Activated CD4-positive, alpha-beta T cell treated with anti-CD3 and anti-CD28 coated beads for 36 hours (primary cell): ENCODE measurements at regions of chr16 and their contacts with region 1.

Region 1: GRCh38 chr16:1492923-1493745 is at the start of gene TELO2:
- DNase-seq: peak; percentile 94
- ATAC-seq: peak; percentile 89
- H3K4me3 Mint-ChIP-seq: peak within 1 kb of the TSS; percentile 92
- H3K27ac Mint-ChIP-seq: peak within 1 kb of the TSS; percentile 97
- H3K4me1 Mint-ChIP-seq: peaks cover 15% of the 10 kb centered on the region
- H3K27me3 Mint-ChIP-seq: no peaks in the 10 kb centered on the region
- total RNA-seq, gene TELO2: 48.1 to 60.0 TPM

Region 2: GRCh38 chr16:1272574-1273113 is 220.5 kb before region 1 on chr16:
- CTCF ChIA-PET with region 1: no interaction called
- POLR2A ChIA-PET with region 1: no interaction called
- intact Hi-C with region 1: no loop called
- DNase-seq: no peak
- ATAC-seq: no peak
- H3K4me3 Mint-ChIP-seq: no peak overlapping the region
- H3K27ac Mint-ChIP-seq: no peak overlapping the region
- H3K4me1 Mint-ChIP-seq: peaks cover 2% of the 10 kb centered on the region
- H3K27me3 Mint-ChIP-seq: peaks cover 11% of the 10 kb centered on the region

Region 3: GRCh38 chr16:1351582-1352362 is 141.4 kb before region 1 on chr16 and contains the starts of genes GNPTG and TSR3:
- CTCF ChIA-PET with region 1: no interaction called
- POLR2A ChIA-PET with region 1: no interaction called
- intact Hi-C with region 1: loop called in 1 of 2 experiments (anchors 1 kb)
- DNase-seq: peak; percentile 91
- ATAC-seq: peak; percentile 87
- H3K4me3 Mint-ChIP-seq: peak within 1 kb of the TSS; percentile 85
- H3K27ac Mint-ChIP-seq: peak within 1 kb of the TSS; percentile 79
- H3K4me1 Mint-ChIP-seq: peaks cover 37% of the 10 kb centered on the region
- H3K27me3 Mint-ChIP-seq: no peaks in the 10 kb centered on the region
- total RNA-seq, gene GNPTG: 16.3 to 17.4 TPM
- total RNA-seq, gene TSR3: 37.6 to 58.7 TPM

Region 4: GRCh38 chr16:1408171-1408837 is 84.8 kb before region 1 on chr16:
- CTCF ChIA-PET with region 1: interaction called, 3 read pairs
- POLR2A ChIA-PET with region 1: no interaction called
- intact Hi-C with region 1: loop called in 1 of 2 experiments (anchors 1 kb)
- DNase-seq: peak; percentile 95
- ATAC-seq: peak; percentile 94
- H3K4me3 Mint-ChIP-seq: peak overlapping the region; percentile 63
- H3K27ac Mint-ChIP-seq: no peak overlapping the region
- H3K4me1 Mint-ChIP-seq: peaks cover 18% of the 10 kb centered on the region
- H3K27me3 Mint-ChIP-seq: no peaks in the 10 kb centered on the region

Region 5: DNA sequence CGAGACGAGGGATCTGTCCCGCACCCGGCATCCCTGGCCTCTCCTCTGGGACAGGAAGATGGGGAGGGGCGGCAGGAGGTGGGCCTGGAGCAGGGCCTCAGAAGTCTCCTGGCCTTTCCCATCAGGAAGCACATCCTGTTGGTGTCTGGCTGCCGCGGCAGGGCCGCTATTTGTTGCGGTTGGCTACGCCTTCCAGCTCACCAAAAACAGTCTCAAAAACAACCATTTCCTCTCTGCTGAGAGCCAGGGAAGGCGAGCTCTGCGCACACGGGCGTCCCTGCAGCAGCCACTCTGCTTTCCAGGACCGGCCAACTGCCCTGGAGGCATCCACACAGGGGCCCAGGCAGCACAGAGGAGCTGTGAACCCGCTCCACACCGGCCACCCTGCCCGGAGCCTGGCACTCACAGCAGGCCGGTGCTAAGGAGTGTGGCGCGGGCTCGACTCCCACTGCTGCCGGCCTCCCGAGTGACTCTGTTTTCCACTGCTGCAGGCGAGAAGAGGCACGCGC is 40.4 kb after region 1 on chr16 and contains the start of gene TMEM204:
- CTCF ChIA-PET with region 1: no interaction called
- POLR2A ChIA-PET with region 1: no interaction called
- intact Hi-C with region 1: loop called in 1 of 2 experiments (anchors 1 kb)
- DNase-seq: peak; percentile 66
- ATAC-seq: peak; percentile 25
- H3K4me3 Mint-ChIP-seq: peak within 1 kb of the TSS; percentile 95
- H3K27ac Mint-ChIP-seq: peak within 1 kb of the TSS; percentile 94
- H3K4me1 Mint-ChIP-seq: peaks cover 39% of the 10 kb centered on the region
- H3K27me3 Mint-ChIP-seq: no peaks in the 10 kb centered on the region
- total RNA-seq, gene TMEM204: 12.6 to 17.5 TPM

Region 6: DNA sequence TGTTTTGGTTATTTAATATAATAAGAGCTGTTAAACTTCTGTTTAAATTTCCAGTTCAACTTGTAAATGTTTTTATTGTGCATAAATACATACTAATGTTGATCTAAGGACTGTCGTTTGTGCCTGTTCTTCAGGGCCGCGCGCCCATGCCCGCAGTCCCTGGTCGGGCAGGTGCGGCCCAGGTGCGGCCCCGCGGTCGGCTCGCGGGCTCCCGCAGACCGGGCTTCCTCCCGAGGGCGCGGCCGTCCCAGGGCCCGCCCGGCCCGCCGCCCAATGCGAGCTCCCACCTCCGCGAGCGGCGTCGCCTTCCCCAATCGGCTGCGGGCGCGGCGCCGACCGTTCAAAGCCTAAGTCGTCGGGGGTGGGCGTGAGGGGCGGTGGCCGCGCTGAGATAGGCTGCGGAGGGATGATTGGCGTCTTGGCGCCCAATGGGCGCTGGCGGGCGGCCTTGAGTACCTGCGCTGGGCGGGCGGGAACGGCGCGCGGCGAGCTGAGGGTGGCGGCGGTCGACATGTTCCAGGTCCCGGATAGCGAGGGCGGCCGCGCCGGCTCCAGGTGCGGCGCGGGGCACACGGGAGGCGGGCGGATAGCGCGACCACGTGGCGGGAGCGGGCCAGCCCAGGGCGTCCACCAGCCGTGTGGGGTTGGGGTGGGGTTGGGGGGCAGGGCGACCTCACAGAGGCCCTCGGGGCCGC is 184.8 kb after region 1 on chr16 and contains the start of gene JPT2:
- CTCF ChIA-PET with region 1: no interaction called
- POLR2A ChIA-PET with region 1: no interaction called
- intact Hi-C with region 1: loop called in 1 of 2 experiments (anchors 1 kb)
- DNase-seq: peak; percentile 98
- ATAC-seq: peak; percentile 99
- H3K4me3 Mint-ChIP-seq: peak within 1 kb of the TSS; percentile 94
- H3K27ac Mint-ChIP-seq: peak within 1 kb of the TSS; percentile 89
- H3K4me1 Mint-ChIP-seq: peaks cover 26% of the 10 kb centered on the region
- H3K27me3 Mint-ChIP-seq: no peaks in the 10 kb centered on the region
- total RNA-seq, gene JPT2: 77.1 to 111 TPM

Region 7: GRCh38 chr16:1782352-1783091 is 289.4 kb after region 1 on chr16 and contains the starts of genes NUBP2 and SPSB3:
- CTCF ChIA-PET with region 1: interaction called, 3 read pairs
- POLR2A ChIA-PET with region 1: no interaction called
- intact Hi-C with region 1: loop called in 1 of 2 experiments (anchors 1 kb)
- DNase-seq: peak; percentile 99
- ATAC-seq: peak; percentile 93
- H3K4me3 Mint-ChIP-seq: peak within 1 kb of the TSS; percentile 94
- H3K27ac Mint-ChIP-seq: peak within 1 kb of the TSS; percentile 85
- H3K4me1 Mint-ChIP-seq: peaks cover 26% of the 10 kb centered on the region
- H3K27me3 Mint-ChIP-seq: no peaks in the 10 kb centered on the region
- total RNA-seq, gene NUBP2: 34.4 to 42.4 TPM
- total RNA-seq, gene SPSB3: 12.5 to 13.6 TPM

Region 8: GRCh38 chr16:1991948-1992703 is 499.0 kb after region 1 on chr16:
- CTCF ChIA-PET with region 1: no interaction called
- POLR2A ChIA-PET with region 1: no interaction called
- intact Hi-C with region 1: loop called in 1 of 2 experiments (anchors 2 kb)
- DNase-seq: peak; percentile 100
- ATAC-seq: peak; percentile 70
- H3K4me3 Mint-ChIP-seq: peak overlapping the region; percentile 56
- H3K27ac Mint-ChIP-seq: no peak overlapping the region
- H3K4me1 Mint-ChIP-seq: peaks cover 27% of the 10 kb centered on the region
- H3K27me3 Mint-ChIP-seq: peaks cover 15% of the 10 kb centered on the region